ENCODE measurements at regions of chr12 and their contacts with region 1.

Region 1: DNA sequence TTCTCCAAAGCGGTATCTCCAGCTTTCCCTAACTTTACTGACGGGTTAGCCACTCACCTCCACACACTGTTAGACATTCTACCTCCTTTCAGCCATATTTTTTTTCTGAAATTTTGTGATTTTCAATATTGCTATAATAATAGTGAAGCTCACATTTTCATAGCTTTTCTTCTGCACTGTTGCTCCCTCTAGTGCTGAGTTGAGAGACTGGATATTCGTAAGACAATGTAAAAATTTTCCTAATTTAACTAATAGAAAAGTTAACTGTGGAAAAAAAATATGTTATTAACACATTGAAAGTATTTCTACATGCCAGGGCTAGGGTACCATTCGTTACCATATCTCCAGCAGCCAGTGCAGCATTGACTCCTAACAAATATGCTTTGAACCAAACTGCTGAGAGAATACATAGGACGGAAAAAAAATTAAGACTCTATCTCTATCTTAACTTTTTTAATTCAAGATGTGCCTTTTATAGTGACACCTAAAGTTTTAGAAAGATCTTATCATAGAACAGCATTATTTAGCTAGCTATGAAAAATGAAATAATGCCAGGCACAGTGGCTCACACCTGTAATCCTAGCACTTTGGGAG is 48.7 kb upstream of the ABCC9 start:
- DNase-seq: peak in 2 of 4 donors; percentile 35 to 53
- ATAC-seq: peak; percentile 71
- H3K4me3 ChIP-seq: no peak overlapping the region
- H3K27ac ChIP-seq: no peak overlapping the region
- H3K4me1 ChIP-seq: no peaks in the 10 kb centered on the region
- H3K27me3 ChIP-seq: no peaks in the 10 kb centered on the region
- CTCF ChIP-seq: peak; percentile 33 to 44

Region 2: DNA sequence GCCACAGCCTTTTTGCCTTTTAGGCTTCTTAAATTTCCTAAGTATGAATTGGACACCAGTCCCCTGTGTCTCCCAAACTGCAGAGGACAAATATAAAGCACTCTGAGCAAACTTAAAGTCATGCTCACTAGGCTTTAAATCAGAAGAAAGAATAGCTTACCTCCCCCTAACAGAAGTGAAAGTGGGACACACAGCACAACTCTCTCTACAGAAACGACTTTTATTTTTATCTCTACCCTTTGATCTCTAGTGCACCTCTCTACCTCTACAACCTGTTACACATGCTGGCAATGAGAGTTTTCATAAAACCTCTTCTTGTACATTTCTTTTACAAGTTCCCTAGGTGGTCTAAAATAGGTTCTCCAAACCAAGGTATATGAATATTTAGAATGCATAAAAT is 597.5 kb before region 1 on chr12:
- intact Hi-C with region 1: no loop called
- DNase-seq: no peak
- ATAC-seq: no peak
- H3K4me3 ChIP-seq: no peak overlapping the region
- H3K27ac ChIP-seq: no peak overlapping the region
- H3K4me1 ChIP-seq: no peaks in the 10 kb centered on the region
- H3K27me3 ChIP-seq: no peaks in the 10 kb centered on the region
- CTCF ChIP-seq: no peak

Region 3: DNA sequence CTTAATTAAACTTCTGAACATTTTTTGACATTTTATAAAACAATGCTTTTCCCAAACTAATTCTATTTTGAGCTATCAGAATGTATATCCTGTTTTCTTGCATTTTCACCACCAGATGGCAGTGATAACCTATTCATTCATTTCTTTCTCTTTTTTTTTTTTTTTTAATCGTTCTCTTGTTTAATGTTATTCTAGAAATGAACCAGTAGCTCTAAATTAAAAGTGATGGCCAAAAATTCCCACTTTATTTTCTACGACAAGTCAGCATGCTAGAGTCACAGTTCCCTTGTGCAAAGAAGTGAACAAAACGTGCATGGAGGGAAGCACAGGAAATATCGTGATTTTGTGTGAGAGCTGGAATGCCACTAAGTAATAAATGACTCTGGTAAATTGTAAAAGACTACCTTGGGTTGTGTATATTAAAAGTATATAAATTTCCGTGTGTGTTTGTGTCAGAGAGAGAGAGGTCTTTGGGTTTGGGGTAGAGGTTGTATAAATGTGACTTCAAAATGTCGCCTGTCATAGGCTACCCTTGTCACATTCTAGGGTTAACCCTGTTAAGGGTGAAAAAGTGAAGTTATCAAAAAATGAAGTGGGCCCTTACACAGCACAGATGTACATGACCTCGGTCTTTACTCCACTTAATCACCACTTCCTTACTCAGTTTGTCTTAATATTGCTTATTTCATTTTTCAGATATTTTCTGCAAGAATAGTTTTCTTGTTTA is 291.8 kb before region 1 on chr12:
- intact Hi-C with region 1: loop called in 1 of 2 experiments (anchors 10 kb)
- DNase-seq: peak in 2 of 4 donors; percentile 48 to 67
- ATAC-seq: peak; percentile 75
- H3K4me3 ChIP-seq: no peak overlapping the region
- H3K27ac ChIP-seq: no peak overlapping the region
- H3K4me1 ChIP-seq: no peaks in the 10 kb centered on the region
- H3K27me3 ChIP-seq: no peaks in the 10 kb centered on the region
- CTCF ChIP-seq: peak; percentile 51 to 57